Activated T-helper 1 cell treated with anti-CD3 and anti-CD28 coated beads, Interleukin-12 subunit alpha, Interleukin-12 subunit beta, Interleukin-2, Interleukin-4 antibody, amounts not matched to agents 30 ng/mL and 10 ng/mL and 1 ng/mL, durations not matched to agents 14 hours and 24 hours and 36 hours (primary cell): ENCODE measurements at regions of chrX and their contacts with region 1.

Region 1: DNA sequence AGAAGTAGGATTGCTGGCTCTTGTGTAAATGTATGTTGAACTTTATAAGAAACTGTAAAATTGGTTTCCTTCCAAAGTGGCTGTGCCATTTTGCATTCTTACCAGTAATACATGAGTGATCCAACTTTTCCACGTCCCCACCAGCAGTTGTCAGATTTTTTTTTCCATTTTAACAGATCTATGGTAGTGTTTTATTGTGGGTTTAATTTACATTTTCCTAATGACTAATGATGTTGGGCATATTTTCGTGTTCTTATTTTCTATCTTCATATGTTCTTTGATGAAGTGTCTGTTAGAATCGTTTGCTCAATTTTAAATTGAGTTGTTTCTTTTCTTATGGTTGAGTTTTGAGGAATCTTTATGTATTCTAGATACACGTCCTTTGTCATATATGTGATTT is 56.2 kb downstream of the PHEX start:
- DNase-seq: no peak
- H3K4me3 Mint-ChIP-seq: no peak overlapping the region
- H3K27ac Mint-ChIP-seq: peak overlapping the region; percentile 76
- H3K4me1 Mint-ChIP-seq: peaks cover 18% of the 10 kb centered on the region
- H3K27me3 Mint-ChIP-seq: no peaks in the 10 kb centered on the region

Region 2: DNA sequence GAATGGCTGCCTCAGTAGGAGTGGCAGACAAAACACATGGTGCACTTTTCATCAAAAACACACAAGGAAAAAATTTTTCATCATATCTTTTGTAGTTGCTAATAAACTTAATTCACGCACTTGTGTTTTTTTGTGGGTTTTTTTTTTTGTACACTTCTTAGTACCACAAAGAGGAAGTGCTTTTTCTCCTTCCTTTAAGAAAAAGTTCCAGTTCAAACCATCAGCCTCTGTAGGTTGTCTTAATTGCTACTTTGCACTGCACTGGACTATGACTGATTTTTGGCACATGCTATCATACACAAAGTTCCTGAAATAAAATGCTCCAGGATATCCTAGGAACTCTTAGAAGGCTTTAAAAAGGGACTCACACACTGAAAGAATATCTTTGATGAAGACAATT is 56.2 kb before region 1 on chrX and contains the start of gene PHEX:
- intact Hi-C with region 1: loop called (anchors 2 kb)
- DNase-seq: no peak
- H3K4me3 Mint-ChIP-seq: no peak within 1 kb of the TSS
- H3K27ac Mint-ChIP-seq: peak within 1 kb of the TSS; percentile 63
- H3K4me1 Mint-ChIP-seq: peaks cover 21% of the 10 kb centered on the region
- H3K27me3 Mint-ChIP-seq: no peaks in the 10 kb centered on the region
- total RNA-seq, gene PHEX: 12.8 and 14.3 TPM in 2 replicates